Caco-2 (cell line): ENCODE measurements at regions of chr19 and their contacts with region 1.

Region 1: GRCh38 chr19:54630782-54631181 is 498 bp downstream of the LILRB1 start:
- DNase-seq: no peak
- H3K4me3 ChIP-seq: no peak overlapping the region
- H3K4me3 Mint-ChIP-seq: no peak overlapping the region
- H3K27ac Mint-ChIP-seq: no peak overlapping the region
- H3K4me1 ChIP-seq: no peaks in the 10 kb centered on the region
- H3K4me1 Mint-ChIP-seq: no peaks in the 10 kb centered on the region
- H3K27me3 ChIP-seq: no peaks in the 10 kb centered on the region; the same call in 1 of the 2 replicates
- H3K27me3 Mint-ChIP-seq: peaks cover 23% of the 10 kb centered on the region
- CTCF ChIP-seq: no peak

Region 2: DNA sequence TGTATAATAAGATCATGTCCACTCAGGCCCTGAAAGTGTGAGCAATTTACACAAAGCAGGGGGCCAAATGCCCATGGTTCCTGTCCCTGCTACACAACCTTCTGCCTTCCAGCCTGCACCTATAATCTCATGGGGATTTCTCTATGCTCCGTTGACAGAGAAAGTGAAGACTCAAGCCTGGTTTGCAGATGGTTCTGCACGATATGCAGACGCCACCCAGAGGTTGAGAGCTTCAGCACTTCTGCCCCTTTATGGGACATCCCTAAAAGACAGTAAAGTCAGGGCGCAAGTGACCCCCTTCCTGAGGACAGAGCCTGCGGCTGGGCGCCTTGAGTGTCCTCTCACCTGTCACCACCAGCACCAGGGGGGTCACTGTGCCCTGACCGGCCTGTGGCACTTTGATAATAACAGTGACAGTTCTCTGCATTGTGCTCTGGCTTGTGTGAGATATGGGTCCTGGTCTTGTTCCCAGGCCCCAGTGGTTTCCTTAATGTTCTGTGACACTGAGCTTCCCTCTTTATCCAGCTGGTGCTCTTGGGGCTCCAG is 332.9 kb before region 1 on chr19:
- CTCF ChIA-PET with region 1: no interaction called
- POLR2A ChIA-PET with region 1: no interaction called
- intact Hi-C with region 1: loop called (anchors 5 kb)
- DNase-seq: peak in 1 of 2 experiments; percentile 13
- H3K4me3 ChIP-seq: no peak overlapping the region
- H3K4me3 Mint-ChIP-seq: no peak overlapping the region
- H3K27ac Mint-ChIP-seq: no peak overlapping the region
- H3K4me1 ChIP-seq: no peaks in the 10 kb centered on the region; the same call in 1 of the 2 replicates
- H3K4me1 Mint-ChIP-seq: no peaks in the 10 kb centered on the region
- H3K27me3 ChIP-seq: no peaks in the 10 kb centered on the region
- H3K27me3 Mint-ChIP-seq: peaks cover 15% of the 10 kb centered on the region
- CTCF ChIP-seq: peak in 1 of 2 experiments; percentile 35

Region 3: GRCh38 chr19:54606230-54606629 is 24.6 kb before region 1 on chr19:
- CTCF ChIA-PET with region 1: no interaction called
- POLR2A ChIA-PET with region 1: no interaction called
- intact Hi-C with region 1: no loop called
- DNase-seq: no peak
- H3K4me3 ChIP-seq: no peak overlapping the region
- H3K4me3 Mint-ChIP-seq: no peak overlapping the region
- H3K27ac Mint-ChIP-seq: no peak overlapping the region
- H3K4me1 ChIP-seq: no peaks in the 10 kb centered on the region
- H3K4me1 Mint-ChIP-seq: no peaks in the 10 kb centered on the region
- H3K27me3 ChIP-seq: no peaks in the 10 kb centered on the region
- H3K27me3 Mint-ChIP-seq: peaks cover 11% of the 10 kb centered on the region
- CTCF ChIP-seq: no peak

Region 4: DNA sequence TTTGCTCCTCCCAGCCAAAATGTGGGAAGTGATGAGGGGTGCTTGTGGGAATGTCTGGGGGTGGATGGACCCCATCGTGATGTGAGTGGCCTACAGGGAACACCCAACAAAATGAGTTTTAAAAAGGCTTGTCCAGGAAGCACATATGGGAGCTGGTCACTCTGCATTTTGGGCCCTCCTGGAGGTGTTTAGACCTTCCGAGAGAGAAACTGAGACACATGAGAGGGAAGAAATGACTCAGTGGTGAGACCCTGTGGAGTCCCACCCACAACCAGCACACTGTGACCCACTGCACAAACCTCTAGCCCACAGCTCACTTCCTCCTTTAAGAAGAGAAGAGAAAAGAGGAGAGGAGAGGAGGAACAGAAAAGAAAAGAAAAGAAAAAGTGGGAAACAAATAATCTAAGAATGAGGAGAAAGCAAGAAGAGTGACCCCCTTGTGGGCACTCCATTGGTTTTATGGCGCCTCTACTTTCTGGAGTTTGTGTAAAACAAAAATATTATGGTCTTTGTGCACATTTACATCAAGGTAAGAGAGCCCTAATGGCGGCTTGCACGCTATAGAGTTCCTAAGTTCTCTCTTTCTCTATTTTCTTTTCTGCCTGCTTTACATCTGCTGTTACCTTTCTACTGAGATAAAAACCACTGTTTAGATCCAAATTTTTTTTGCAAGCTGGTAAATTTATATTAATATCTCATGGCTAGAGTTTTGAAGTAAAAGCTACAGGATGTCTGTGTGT is 13.8 kb before region 1 on chr19:
- CTCF ChIA-PET with region 1: no interaction called
- POLR2A ChIA-PET with region 1: no interaction called
- intact Hi-C with region 1: no loop called
- DNase-seq: no peak
- H3K4me3 ChIP-seq: no peak overlapping the region
- H3K4me3 Mint-ChIP-seq: no peak overlapping the region
- H3K27ac Mint-ChIP-seq: no peak overlapping the region
- H3K4me1 ChIP-seq: no peaks in the 10 kb centered on the region
- H3K4me1 Mint-ChIP-seq: no peaks in the 10 kb centered on the region
- H3K27me3 ChIP-seq: no peaks in the 10 kb centered on the region
- H3K27me3 Mint-ChIP-seq: peaks cover 15% of the 10 kb centered on the region
- CTCF ChIP-seq: no peak